Left colon (tissue), 2 donors: ENCODE measurements at regions of chr2 and their contacts with region 1.

Region 1: DNA sequence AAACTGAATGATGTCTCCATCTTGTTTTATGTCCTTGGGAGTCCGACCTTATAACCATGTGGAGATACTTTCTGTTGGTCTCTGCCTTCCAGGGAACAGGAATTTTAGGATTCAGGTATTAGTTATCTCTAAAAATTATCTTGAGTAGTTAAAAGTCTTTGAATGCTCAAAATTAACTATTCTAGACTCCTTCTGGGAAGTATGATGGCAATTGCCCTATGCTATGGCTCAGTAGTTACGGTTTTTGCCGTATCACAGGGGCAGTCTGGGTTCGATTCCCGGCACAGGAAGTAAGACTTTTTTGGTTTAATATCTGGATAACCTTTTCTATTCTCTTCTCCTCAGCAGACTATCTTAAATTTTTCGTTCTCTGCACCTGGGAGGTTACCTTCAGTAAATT is 708.7 kb upstream of the LRATD1 start:
- DNase-seq: no peak
- ATAC-seq: no peak

Region 2: GRCh38 chr2:13779996-13780395 is 143.8 kb before region 1 on chr2:
- intact Hi-C with region 1: no loop called
- DNase-seq: no peak
- ATAC-seq: no peak

Region 3: DNA sequence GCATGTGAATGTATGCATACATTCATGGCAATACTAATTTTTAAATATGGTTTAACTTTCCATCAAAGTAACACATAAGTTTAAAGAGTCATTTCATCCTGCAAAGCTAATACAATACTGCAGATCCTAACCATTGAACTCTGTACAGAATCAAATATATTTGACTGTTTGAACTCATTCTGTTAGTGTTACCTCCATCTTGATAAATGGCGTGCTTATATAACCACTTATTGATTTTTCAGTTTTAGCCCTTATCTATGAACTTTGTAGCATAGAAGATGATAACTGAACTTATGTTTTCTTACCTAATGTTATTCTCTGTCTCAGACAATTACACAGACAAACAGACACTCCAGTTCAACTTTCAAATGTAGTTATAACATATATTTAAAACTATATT is 22.3 kb before region 1 on chr2:
- intact Hi-C with region 1: loop called in 1 of 2 experiments (anchors 2 kb)
- DNase-seq: no peak
- ATAC-seq: no peak